WTC11 (cell line): ENCODE measurements at regions of chr17 and their contacts with region 1.

Region 1: DNA sequence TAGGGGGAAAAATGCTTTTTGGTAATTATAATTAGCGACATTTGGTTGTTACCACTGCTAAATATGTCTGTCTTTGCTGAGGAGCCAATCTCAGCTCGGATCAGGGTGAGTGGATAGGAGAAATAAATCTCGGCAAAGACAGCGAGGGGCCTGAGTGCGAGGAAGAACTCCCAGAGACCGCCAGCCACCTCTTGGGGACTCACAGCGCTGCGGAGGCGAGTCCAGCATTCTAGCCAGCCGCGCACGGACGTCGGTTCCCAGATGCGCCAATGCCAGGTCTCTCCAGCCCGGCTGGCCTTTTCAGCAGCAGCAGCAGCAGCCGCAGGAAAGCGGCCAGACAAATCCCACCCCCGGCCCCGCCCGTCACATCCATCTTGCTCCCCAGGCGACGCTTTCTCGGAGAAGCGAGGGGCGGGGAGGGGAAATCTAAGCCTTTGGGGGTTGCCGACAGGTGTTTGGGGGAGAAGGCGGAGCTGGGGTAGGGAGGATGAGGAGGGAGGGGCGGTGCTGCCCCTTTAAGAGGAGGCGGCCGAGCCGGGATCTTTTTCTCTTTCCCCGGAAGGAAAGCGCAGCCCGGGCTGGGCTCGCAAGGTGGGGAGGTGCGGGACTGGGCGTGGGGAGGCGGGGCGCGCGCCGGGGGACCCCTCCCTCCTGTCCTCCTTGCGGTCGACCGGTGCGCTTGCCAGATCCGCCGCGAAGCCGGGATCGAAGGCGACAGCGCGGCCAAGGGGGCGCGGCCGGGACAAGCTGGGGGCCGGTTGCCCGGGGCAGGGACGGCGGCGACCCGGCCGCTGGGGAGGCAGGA is at the start of gene ITGA3:
- DNase-seq: peak; percentile 90
- ATAC-seq: peak; percentile 65
- H3K4me3 Mint-ChIP-seq: peak within 1 kb of the TSS; percentile 89
- H3K27ac Mint-ChIP-seq: peak within 1 kb of the TSS; percentile 99
- H3K4me1 Mint-ChIP-seq: peaks cover 56% of the 10 kb centered on the region
- H3K27me3 Mint-ChIP-seq: peaks cover 22% of the 10 kb centered on the region
- CTCF ChIP-seq: no peak
- total RNA-seq, gene ITGA3: 35.3 to 44.2 TPM (median 35.5 TPM) in 3 replicates

Region 2: GRCh38 chr17:49822829-49823228 is 232.8 kb before region 1 on chr17:
- CTCF ChIA-PET with region 1: no interaction called
- POLR2A ChIA-PET with region 1: no interaction called
- DNase-seq: no peak
- ATAC-seq: no peak
- H3K4me3 Mint-ChIP-seq: no peak overlapping the region
- H3K27ac Mint-ChIP-seq: peak overlapping the region; percentile 44
- H3K4me1 Mint-ChIP-seq: peaks cover 57% of the 10 kb centered on the region
- H3K27me3 Mint-ChIP-seq: no peaks in the 10 kb centered on the region
- CTCF ChIP-seq: no peak

Region 3: DNA sequence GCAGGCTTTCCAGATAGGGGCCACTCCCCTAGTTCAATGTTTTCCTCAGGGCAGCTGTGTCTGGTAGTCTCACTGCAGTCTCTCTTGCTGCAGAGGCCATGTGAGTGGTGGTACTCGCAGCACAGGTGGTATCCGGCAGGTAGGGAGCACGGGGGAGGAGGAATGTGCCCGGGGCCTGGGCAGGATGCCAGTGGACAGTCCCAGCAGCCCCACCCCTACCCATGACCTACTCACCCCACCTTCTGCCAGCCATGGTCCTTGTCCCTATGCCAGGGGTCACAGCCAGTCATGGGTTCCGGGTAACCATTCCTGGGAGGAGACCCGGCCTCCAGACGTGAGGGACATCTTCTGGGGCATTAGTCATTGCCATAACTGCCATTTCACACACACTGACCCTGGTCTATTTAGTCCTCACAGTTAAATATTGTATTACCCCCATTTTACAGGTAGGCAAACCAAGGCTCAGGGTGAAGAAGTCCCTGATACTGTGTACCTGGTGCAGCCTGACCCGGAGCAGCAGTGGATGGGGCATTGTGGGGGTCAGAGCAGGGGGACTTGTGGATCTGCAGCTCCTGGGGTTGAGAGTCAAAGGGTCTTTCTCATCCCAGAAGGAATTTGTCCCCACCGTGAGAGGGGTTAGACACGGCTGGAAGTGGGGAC is 149.0 kb before region 1 on chr17:
- CTCF ChIA-PET with region 1: no interaction called
- POLR2A ChIA-PET with region 1: no interaction called
- DNase-seq: no peak
- ATAC-seq: no peak
- H3K4me3 Mint-ChIP-seq: no peak overlapping the region
- H3K27ac Mint-ChIP-seq: no peak overlapping the region
- H3K4me1 Mint-ChIP-seq: peaks cover 39% of the 10 kb centered on the region
- H3K27me3 Mint-ChIP-seq: peaks cover 92% of the 10 kb centered on the region
- CTCF ChIP-seq: no peak

Region 4: GRCh38 chr17:50026901-50027630 is 28.6 kb before region 1 on chr17:
- CTCF ChIA-PET with region 1: interaction called, 25 read pairs
- POLR2A ChIA-PET with region 1: interaction called, 15 read pairs
- DNase-seq: peak; percentile 92
- ATAC-seq: peak; percentile 67
- H3K4me3 Mint-ChIP-seq: peak overlapping the region; percentile 53
- H3K27ac Mint-ChIP-seq: no peak overlapping the region
- H3K4me1 Mint-ChIP-seq: peaks cover 25% of the 10 kb centered on the region
- H3K27me3 Mint-ChIP-seq: peaks cover 11% of the 10 kb centered on the region
- CTCF ChIP-seq: peak; percentile 92

Region 5: GRCh38 chr17:50037321-50038071 is 18.1 kb before region 1 on chr17:
- CTCF ChIA-PET with region 1: interaction called, 10 read pairs
- POLR2A ChIA-PET with region 1: no interaction called
- DNase-seq: no peak
- ATAC-seq: peak; percentile 23
- H3K4me3 Mint-ChIP-seq: no peak overlapping the region
- H3K27ac Mint-ChIP-seq: no peak overlapping the region
- H3K4me1 Mint-ChIP-seq: peaks cover 11% of the 10 kb centered on the region
- H3K27me3 Mint-ChIP-seq: peaks cover 5% of the 10 kb centered on the region
- CTCF ChIP-seq: no peak

Region 6: GRCh38 chr17:50087246-50087911 is 31.8 kb after region 1 on chr17:
- CTCF ChIA-PET with region 1: interaction called, 25 read pairs
- POLR2A ChIA-PET with region 1: interaction called, 5 read pairs
- DNase-seq: peak; percentile 89
- ATAC-seq: peak; percentile 96
- H3K4me3 Mint-ChIP-seq: no peak overlapping the region
- H3K27ac Mint-ChIP-seq: no peak overlapping the region
- H3K4me1 Mint-ChIP-seq: no peaks in the 10 kb centered on the region
- H3K27me3 Mint-ChIP-seq: no peaks in the 10 kb centered on the region
- CTCF ChIP-seq: peak; percentile 99